Ovary (tissue), 10 donors: ENCODE measurements at regions of chrX and their contacts with region 1.

Region 1: GRCh38 chrX:144715337-144715736 is 532.0 kb upstream of the SPANXN1 start:
- DNase-seq: no peak
- H3K4me3 ChIP-seq: no peak overlapping the region
- H3K27ac ChIP-seq: no peak overlapping the region
- H3K4me1 ChIP-seq: no peaks in the 10 kb centered on the region
- H3K27me3 ChIP-seq: no peaks in the 10 kb centered on the region
- CTCF ChIP-seq: no peak
- EP300 ChIP-seq: no peak
- POLR2A ChIP-seq: no peak

Region 2: DNA sequence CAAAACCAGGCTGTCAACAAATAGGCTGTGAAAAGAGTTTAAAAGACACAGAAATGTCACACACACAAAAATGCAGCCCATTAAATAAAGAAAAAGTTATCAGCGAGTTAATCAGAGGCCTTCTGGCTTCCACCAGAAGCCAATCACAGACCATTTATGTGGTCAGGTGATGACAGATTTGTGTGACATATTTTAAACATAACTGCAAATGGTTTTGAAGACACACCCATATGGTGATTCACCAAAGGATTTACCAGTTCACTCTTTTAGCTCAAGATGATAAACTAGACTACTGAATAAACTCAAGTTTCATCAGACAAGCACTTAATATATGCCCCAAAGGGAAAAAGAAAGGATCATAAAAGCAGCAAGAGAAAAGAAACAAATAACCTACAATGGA is 1508.4 kb before region 1 on chrX:
- intact Hi-C with region 1: no loop called
- DNase-seq: no peak
- H3K4me3 ChIP-seq: no peak overlapping the region
- H3K27ac ChIP-seq: no peak overlapping the region
- H3K4me1 ChIP-seq: no peaks in the 10 kb centered on the region
- H3K27me3 ChIP-seq: no peaks in the 10 kb centered on the region
- CTCF ChIP-seq: no peak
- EP300 ChIP-seq: no peak
- POLR2A ChIP-seq: no peak

Region 3: DNA sequence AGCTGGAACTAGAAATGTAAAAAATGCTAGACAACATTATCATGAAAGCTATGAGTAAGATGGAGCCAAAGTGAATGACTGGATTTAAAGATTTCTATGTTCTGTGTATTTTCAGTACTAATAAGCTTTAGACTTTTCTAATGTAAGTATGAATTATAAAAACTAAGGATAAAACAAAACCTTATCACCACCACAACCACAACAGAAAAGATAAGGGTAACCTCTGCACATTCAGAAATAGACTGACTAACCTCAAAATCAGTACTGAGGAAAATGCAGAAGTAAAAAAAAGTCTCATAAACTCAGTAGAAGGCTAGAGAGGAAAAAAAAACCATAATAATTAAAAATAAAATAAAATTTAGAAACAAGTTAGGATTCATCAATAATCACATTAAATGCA is 846.3 kb before region 1 on chrX:
- intact Hi-C with region 1: loop called in 1 of 4 experiments (anchors 5 kb)
- DNase-seq: no peak
- H3K4me3 ChIP-seq: no peak overlapping the region
- H3K27ac ChIP-seq: no peak overlapping the region
- H3K4me1 ChIP-seq: no peaks in the 10 kb centered on the region
- H3K27me3 ChIP-seq: no peaks in the 10 kb centered on the region
- CTCF ChIP-seq: no peak
- EP300 ChIP-seq: no peak
- POLR2A ChIP-seq: no peak

Region 4: GRCh38 chrX:144681501-144681900 is 33.8 kb before region 1 on chrX:
- intact Hi-C with region 1: no loop called
- DNase-seq: no peak
- H3K4me3 ChIP-seq: no peak overlapping the region
- H3K27ac ChIP-seq: no peak overlapping the region
- H3K4me1 ChIP-seq: no peaks in the 10 kb centered on the region
- H3K27me3 ChIP-seq: no peaks in the 10 kb centered on the region
- CTCF ChIP-seq: no peak
- EP300 ChIP-seq: no peak
- POLR2A ChIP-seq: no peak

Region 5: GRCh38 chrX:144768540-144768939 is 53.2 kb after region 1 on chrX:
- intact Hi-C with region 1: no loop called
- DNase-seq: no peak
- H3K4me3 ChIP-seq: no peak overlapping the region
- H3K27ac ChIP-seq: no peak overlapping the region
- H3K4me1 ChIP-seq: no peaks in the 10 kb centered on the region
- H3K27me3 ChIP-seq: no peaks in the 10 kb centered on the region
- CTCF ChIP-seq: no peak
- EP300 ChIP-seq: no peak
- POLR2A ChIP-seq: no peak